RWPE1 (cell line): ENCODE measurements at regions of chr20 and their contacts with region 1.

Region 1: DNA sequence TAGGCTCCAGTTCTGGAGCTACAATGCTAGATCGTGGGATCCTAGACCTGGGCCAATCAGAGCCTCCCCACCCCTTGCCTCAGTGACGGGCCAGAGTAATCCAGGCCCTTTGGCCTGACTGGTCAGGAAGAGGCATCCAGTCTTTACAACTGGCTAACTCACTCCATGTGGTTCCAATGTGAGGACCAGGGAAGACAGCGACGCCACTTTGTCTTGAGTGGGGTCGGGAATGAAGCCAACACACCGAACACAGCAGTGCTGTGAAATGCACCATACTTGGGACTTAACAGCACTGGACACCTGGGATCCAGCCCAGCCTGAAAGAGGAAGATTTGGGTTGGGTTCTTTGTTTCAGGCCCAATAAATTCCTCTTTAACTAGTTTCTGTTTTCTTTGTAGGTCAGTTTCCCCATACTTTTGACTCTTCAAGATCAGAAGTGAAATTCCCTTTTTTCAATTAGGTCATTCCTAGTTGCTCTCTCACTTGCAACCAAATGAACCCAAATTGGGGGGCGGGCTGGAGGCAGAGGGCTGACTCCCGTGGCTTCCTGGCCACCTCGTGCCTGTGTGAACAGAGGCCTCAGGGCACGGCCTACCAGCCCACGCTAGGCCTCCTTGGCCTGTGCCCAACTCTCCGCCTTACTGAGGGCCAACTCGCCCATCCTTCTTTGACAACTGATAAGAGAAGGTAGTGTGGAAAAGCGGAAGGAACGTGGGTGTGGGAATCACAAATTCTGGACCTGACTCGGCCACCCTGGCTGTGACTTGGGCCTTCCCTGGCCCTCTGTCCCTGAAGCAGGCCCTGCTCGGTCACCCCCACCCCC is 17.1 kb downstream of the SULF2 start:
- DNase-seq: no peak
- H3K27ac ChIP-seq: peak overlapping the region; percentile 68
- CTCF ChIP-seq: no peak

Region 2: DNA sequence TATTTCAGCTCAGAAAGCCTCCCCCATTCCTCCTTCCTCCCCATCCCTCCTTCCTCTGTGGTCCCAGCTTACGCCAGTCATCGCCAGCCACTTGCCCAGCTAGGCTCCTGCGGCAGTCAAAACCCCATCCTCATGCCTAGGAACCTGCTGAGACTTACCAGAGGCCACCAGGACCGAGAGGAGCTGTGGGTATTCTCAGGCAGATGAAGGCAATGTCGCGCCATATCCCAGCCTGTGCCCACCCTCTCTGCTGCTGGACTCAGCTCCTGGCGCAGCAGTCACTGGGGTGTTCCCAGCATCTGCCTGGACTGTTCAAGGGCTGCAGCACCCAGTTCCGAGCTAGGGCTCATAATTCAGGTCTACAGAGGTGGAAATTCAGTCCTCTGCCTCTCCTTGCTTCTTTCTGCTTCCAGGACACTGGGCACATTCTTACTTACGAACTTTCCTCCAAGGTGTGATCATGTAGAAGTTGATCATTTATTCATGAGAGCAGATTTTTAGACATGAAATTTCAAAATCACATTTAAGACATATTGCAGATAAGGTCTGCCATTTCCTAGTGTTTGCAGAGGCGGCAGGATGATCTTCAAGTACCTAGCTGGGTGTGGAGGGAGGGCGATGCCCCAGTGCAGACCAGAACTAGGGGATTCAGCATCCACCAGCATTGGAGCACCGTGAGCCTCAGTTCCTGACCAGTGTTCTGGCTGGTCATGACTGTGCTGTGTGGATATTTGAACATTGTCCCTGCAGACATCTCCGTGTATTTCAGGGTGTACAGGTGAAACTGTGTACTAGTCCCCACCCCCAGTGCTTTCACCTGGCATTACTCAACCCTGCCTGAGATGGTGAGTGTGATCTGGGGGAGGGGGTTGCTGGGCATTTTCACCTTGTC is 369.4 kb after region 1 on chr20:
- CTCF ChIA-PET with region 1: interaction called, 10 read pairs
- POLR2A ChIA-PET with region 1: no interaction called
- DNase-seq: no peak
- H3K27ac ChIP-seq: no peak overlapping the region; the same call in 1 of the 2 replicates
- CTCF ChIP-seq: no peak